Activated T-helper 1 cell treated with anti-CD3 and anti-CD28 coated beads, Interleukin-12 subunit alpha, Interleukin-12 subunit beta, Interleukin-2, Interleukin-4 antibody, amounts not matched to agents 30 ng/mL and 10 ng/mL and 1 ng/mL, durations not matched to agents 14 hours and 24 hours and 36 hours (primary cell): ENCODE measurements at regions of chr2 and their contacts with region 1.

Region 1: GRCh38 chr2:112584134-112584890 is at the start of gene CHCHD5:
- DNase-seq: peak; percentile 94
- H3K4me3 Mint-ChIP-seq: peak within 1 kb of the TSS; percentile 91
- H3K27ac Mint-ChIP-seq: peak within 1 kb of the TSS; percentile 99
- H3K4me1 Mint-ChIP-seq: peaks cover 38% of the 10 kb centered on the region
- H3K27me3 Mint-ChIP-seq: no peaks in the 10 kb centered on the region
- total RNA-seq, gene CHCHD5: 31.3 and 38.9 TPM in 2 replicates

Region 2: DNA sequence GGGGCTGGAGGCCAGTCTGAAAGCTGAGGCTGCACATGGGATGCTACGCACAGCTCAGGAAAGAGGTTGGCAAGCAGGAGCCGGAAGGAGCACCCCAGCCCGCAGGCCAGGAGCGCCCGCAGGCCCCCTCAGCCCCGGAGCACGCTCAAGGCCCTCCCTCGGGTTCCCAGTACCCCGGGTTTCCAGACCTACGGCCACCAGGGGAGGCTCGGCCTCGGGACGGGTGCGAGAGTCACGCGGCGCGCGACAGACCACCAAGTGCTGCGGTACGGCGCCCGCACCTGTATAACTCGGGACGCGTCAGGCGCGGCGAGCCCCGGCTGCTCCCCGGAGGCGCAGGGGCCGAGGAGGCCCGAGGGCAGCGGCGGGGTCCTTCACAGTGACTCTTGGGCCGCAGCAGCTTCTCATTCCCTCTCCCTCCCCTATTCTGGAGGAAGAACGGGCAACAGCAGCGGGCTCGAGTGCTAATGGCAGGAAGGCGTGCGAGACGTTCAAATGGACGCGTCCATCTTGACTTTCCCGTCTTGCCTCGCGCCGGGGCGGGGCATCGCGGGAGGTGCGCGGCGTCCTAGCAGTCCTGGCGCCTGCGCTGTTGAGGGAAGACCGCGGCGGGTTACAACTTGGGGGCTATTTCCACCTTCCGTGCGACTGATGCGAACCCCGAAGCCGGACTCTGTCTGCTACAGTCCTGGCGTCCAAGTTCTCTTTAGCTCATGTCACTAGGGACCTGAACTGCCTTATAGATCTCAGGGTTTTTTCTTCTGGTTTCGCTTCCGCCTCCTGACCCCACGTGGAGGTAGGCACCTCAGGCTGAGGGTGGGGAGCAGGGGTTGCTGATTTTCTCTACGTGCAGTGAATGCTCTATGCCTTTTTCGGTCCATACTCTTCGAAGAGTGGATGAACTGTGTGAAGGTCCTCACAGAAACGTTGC is 700.4 kb before region 1 on chr2 and contains the start of gene ANAPC1:
- intact Hi-C with region 1: loop called (anchors 5 kb)
- DNase-seq: peak; percentile 84
- H3K4me3 Mint-ChIP-seq: peak within 1 kb of the TSS; percentile 95
- H3K27ac Mint-ChIP-seq: peak within 1 kb of the TSS; percentile 93
- H3K4me1 Mint-ChIP-seq: no peaks in the 10 kb centered on the region
- H3K27me3 Mint-ChIP-seq: peaks cover 4% of the 10 kb centered on the region
- total RNA-seq, gene ANAPC1: 120 and 126 TPM in 2 replicates

Region 3: GRCh38 chr2:112187805-112188596 is 396.3 kb before region 1 on chr2:
- intact Hi-C with region 1: loop called (anchors 5 kb)
- DNase-seq: peak; percentile 69
- H3K4me3 Mint-ChIP-seq: peak overlapping the region; percentile 45
- H3K27ac Mint-ChIP-seq: peak overlapping the region; percentile 94
- H3K4me1 Mint-ChIP-seq: peaks cover 71% of the 10 kb centered on the region
- H3K27me3 Mint-ChIP-seq: no peaks in the 10 kb centered on the region

Region 4: GRCh38 chr2:112481050-112481527 is 103.2 kb before region 1 on chr2:
- intact Hi-C with region 1: loop called (anchors 1 kb)
- DNase-seq: peak; percentile 79
- H3K4me3 Mint-ChIP-seq: peak overlapping the region; percentile 87
- H3K27ac Mint-ChIP-seq: peak overlapping the region; percentile 96
- H3K4me1 Mint-ChIP-seq: peaks cover 40% of the 10 kb centered on the region
- H3K27me3 Mint-ChIP-seq: peaks cover 4% of the 10 kb centered on the region

Region 5: GRCh38 chr2:112626604-112627059 is 42.3 kb after region 1 on chr2:
- intact Hi-C with region 1: loop called (anchors 1 kb)
- DNase-seq: peak; percentile 59
- H3K4me3 Mint-ChIP-seq: peak overlapping the region; percentile 57
- H3K27ac Mint-ChIP-seq: peak overlapping the region; percentile 40
- H3K4me1 Mint-ChIP-seq: peaks cover 79% of the 10 kb centered on the region
- H3K27me3 Mint-ChIP-seq: peaks cover 2% of the 10 kb centered on the region

Region 6: GRCh38 chr2:112764071-112765044 is 180.0 kb after region 1 on chr2 and contains the start of gene CKAP2L:
- intact Hi-C with region 1: loop called (anchors 1 kb)
- DNase-seq: peak; percentile 95
- H3K4me3 Mint-ChIP-seq: peak within 1 kb of the TSS; percentile 95
- H3K27ac Mint-ChIP-seq: peak within 1 kb of the TSS; percentile 93
- H3K4me1 Mint-ChIP-seq: peaks cover 50% of the 10 kb centered on the region
- H3K27me3 Mint-ChIP-seq: no peaks in the 10 kb centered on the region
- total RNA-seq, gene CKAP2L: 20.9 and 21.2 TPM in 2 replicates

Region 7: DNA sequence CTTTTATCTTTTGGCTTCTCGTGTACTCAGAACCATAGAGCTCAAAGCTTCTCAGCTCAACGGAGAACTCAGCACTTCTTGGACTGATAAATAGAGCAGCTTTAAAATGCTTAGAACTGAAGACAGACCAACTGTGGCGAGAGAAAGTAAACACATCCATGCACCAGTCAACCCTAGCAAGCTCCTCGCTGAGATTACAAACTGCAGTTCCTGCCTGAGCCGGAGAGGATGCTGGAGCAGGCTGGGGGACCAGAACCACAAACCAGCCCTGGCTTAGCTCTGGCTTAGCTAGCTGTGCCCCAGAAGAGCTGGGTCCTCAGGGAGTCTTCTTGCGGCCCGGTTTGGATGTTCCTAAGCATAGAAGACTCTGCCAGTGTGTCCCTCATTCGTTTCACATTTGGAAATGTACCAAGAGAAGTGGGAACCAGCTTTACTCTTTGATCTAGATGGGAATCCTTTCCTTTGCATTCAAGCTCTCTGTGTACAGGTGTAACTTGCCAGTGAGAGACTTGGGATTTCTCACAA is 688.8 kb after region 1 on chr2:
- intact Hi-C with region 1: no loop called
- DNase-seq: peak; percentile 20
- H3K4me3 Mint-ChIP-seq: no peak overlapping the region
- H3K27ac Mint-ChIP-seq: no peak overlapping the region
- H3K4me1 Mint-ChIP-seq: peaks cover 16% of the 10 kb centered on the region
- H3K27me3 Mint-ChIP-seq: peaks cover 72% of the 10 kb centered on the region